Naive thymus-derived CD4-positive, alpha-beta T cell (primary cell): ENCODE measurements at regions of chr17 and their contacts with region 1.

Region 1: GRCh38 chr17:4966844-4967538 is 626 bp downstream of the SPAG7 start:
- DNase-seq: peak in 8 of 9 donors; percentile 25 to 97 (median 95)
- ATAC-seq: peak; percentile 89
- H3K4me3 ChIP-seq: peak overlapping the region; percentile 93
- H3K4me3 Mint-ChIP-seq: no peak overlapping the region
- H3K27ac ChIP-seq: peak overlapping the region; percentile 79
- H3K27ac Mint-ChIP-seq: peak overlapping the region in 3 of 9 donors; percentile 72 to 90 (median 81)
- H3K4me1 ChIP-seq: peaks cover 17 to 22% of the 10 kb centered on the region in 2 donors
- H3K4me1 Mint-ChIP-seq: peaks cover 15 to 32% (median 24%) of the 10 kb centered on the region in 7 donors
- H3K27me3 ChIP-seq: no peaks in the 10 kb centered on the region
- H3K27me3 Mint-ChIP-seq: no peaks in the 10 kb centered on the region

Region 2: GRCh38 chr17:4118015-4118743 is 848.8 kb before region 1 on chr17:
- CTCF ChIA-PET with region 1: no interaction called
- POLR2A ChIA-PET with region 1: no interaction called
- intact Hi-C with region 1: no loop called
- DNase-seq: no peak
- ATAC-seq: no peak
- H3K4me3 ChIP-seq: no peak overlapping the region
- H3K4me3 Mint-ChIP-seq: no peak overlapping the region
- H3K27ac ChIP-seq: no peak overlapping the region
- H3K27ac Mint-ChIP-seq: peak overlapping the region in 2 of 9 donors; percentile 3 to 76
- H3K4me1 ChIP-seq: no peaks in the 10 kb centered on the region
- H3K4me1 Mint-ChIP-seq: peaks cover 0 to 11% (median 4%) of the 10 kb centered on the region in 7 donors
- H3K27me3 ChIP-seq: no peaks in the 10 kb centered on the region
- H3K27me3 Mint-ChIP-seq: no peaks in the 10 kb centered on the region

Region 3: DNA sequence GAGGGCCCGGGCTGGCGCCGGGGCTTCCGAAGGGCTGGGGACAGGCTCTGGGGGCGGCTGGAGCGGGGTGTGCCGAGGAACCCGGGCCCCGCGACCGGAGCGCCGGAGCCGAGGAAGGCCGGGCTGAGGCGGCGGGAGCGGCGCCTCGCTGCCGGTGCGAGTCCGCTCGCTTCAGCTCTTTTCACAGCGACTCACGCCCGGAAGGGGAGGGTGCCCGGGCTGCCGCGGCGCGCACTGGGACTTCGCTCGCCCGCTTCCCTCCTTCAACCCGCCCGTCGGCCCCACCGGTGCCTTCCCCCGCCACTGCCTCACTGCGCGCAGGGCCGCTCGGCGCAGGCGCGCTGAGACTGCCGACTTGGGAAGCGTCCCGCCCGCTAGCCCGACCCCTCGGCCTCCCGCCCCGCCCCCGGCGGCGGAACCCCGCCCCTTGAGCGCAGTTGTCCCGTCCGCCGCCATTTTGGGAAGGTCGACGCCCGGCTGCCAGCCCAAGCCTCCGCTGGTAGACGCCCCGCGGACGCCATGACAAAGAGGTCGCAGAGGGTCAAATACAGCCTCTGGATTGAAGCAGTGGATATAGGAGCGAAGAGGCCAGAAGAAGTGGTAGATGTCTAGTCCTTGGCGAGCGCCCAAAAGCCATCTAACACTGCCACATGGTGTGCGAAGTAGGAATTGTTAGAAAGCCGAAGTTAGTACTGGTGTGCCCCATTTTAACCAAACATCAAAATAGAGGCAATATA is 600.5 kb before region 1 on chr17 and contains the start of gene UBE2G1:
- CTCF ChIA-PET with region 1: no interaction called
- POLR2A ChIA-PET with region 1: interaction called, 3 read pairs
- intact Hi-C with region 1: loop called (anchors 1 to 5 kb)
- DNase-seq: peak; percentile 97 to 100 (median 99)
- ATAC-seq: peak; percentile 93
- H3K4me3 ChIP-seq: peak within 1 kb of the TSS; percentile 58
- H3K4me3 Mint-ChIP-seq: peak within 1 kb of the TSS; percentile 82 to 95 (median 89)
- H3K27ac ChIP-seq: peak within 1 kb of the TSS; percentile 94
- H3K27ac Mint-ChIP-seq: peak within 1 kb of the TSS; percentile 91 to 99 (median 96)
- H3K4me1 ChIP-seq: peaks cover 11% of the 10 kb centered on the region in 2 donors
- H3K4me1 Mint-ChIP-seq: peaks cover 15 to 37% (median 33%) of the 10 kb centered on the region in 7 donors
- H3K27me3 ChIP-seq: no peaks in the 10 kb centered on the region
- H3K27me3 Mint-ChIP-seq: no peaks in the 10 kb centered on the region
- total RNA-seq, gene UBE2G1: 50.1 to 63.7 (median 56.6) TPM

Region 4: DNA sequence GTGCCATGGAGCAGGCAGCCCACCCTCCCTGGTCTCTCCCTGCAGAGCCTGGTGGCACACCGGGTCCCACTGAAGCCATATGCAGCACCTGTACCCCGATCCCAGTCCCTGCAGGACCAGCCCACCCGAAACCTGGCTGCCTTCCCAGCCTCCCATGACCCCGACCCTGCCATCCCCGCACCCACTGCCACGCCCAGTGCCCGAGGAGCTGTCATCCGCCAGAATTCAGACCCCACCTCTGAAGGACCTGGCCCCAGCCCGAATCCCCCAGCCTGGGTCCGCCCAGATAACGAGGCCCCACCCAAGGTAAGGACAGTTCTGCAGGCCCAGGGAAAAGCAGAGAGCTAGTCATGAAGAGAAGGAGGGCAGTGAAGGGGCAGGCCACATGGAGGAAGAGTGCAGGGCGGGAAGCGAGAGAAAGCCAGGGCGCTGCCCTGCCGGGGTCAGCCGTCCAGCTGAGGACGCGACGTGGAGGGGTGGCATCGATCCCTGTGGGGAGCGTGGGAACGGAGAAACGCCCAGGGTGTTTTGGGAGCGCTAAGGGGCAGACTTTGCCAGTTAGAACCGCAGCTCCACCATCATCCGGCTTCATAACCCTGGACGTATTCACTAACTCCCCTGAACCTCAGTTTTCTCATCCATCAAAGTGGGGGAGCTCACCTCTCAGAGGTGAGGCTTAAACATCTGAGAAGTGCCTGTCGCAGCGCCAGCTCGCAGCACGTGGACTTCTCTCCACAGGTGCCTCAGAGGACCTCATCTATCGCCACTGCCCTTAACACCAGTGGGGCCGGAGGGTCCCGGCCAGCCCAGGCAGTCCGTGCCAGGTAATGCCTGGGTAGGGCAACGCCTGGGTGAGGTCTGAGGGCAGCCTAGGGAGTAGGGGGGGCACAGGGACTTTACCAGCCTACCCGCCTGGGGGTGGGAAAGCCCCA is 75.3 kb before region 1 on chr17:
- CTCF ChIA-PET with region 1: no interaction called
- POLR2A ChIA-PET with region 1: no interaction called
- intact Hi-C with region 1: no loop called
- DNase-seq: no peak
- ATAC-seq: no peak
- H3K4me3 ChIP-seq: no peak overlapping the region
- H3K4me3 Mint-ChIP-seq: no peak overlapping the region
- H3K27ac ChIP-seq: no peak overlapping the region
- H3K27ac Mint-ChIP-seq: no peak overlapping the region
- H3K4me1 ChIP-seq: no peaks in the 10 kb centered on the region
- H3K4me1 Mint-ChIP-seq: peaks cover 0 to 5% (median 2%) of the 10 kb centered on the region in 7 donors
- H3K27me3 ChIP-seq: no peaks in the 10 kb centered on the region
- H3K27me3 Mint-ChIP-seq: no peaks in the 10 kb centered on the region

Region 5: GRCh38 chr17:4903051-4903818 is 63.8 kb before region 1 on chr17 and contains the start of gene CHRNE:
- CTCF ChIA-PET with region 1: interaction called, 5 read pairs
- POLR2A ChIA-PET with region 1: interaction called, 20 read pairs
- intact Hi-C with region 1: loop called in 1 of 2 experiments (anchors 1 kb)
- DNase-seq: peak in 8 of 9 donors; percentile 63 to 80 (median 76)
- ATAC-seq: peak; percentile 41
- H3K4me3 ChIP-seq: peak within 1 kb of the TSS; percentile 29
- H3K4me3 Mint-ChIP-seq: peak within 1 kb of the TSS; percentile 37 to 84 (median 72)
- H3K27ac ChIP-seq: no peak within 1 kb of the TSS
- H3K27ac Mint-ChIP-seq: peak within 1 kb of the TSS; percentile 57 to 98 (median 71)
- H3K4me1 ChIP-seq: peaks cover 29 to 40% of the 10 kb centered on the region in 2 donors
- H3K4me1 Mint-ChIP-seq: peaks cover 14 to 46% (median 37%) of the 10 kb centered on the region in 7 donors
- H3K27me3 ChIP-seq: no peaks in the 10 kb centered on the region
- H3K27me3 Mint-ChIP-seq: peaks cover 0 to 20% (median 0%) of the 10 kb centered on the region in 5 donors
- total RNA-seq, gene CHRNE: 0.34 to 6.5 (median 1.0) TPM

Region 6: DNA sequence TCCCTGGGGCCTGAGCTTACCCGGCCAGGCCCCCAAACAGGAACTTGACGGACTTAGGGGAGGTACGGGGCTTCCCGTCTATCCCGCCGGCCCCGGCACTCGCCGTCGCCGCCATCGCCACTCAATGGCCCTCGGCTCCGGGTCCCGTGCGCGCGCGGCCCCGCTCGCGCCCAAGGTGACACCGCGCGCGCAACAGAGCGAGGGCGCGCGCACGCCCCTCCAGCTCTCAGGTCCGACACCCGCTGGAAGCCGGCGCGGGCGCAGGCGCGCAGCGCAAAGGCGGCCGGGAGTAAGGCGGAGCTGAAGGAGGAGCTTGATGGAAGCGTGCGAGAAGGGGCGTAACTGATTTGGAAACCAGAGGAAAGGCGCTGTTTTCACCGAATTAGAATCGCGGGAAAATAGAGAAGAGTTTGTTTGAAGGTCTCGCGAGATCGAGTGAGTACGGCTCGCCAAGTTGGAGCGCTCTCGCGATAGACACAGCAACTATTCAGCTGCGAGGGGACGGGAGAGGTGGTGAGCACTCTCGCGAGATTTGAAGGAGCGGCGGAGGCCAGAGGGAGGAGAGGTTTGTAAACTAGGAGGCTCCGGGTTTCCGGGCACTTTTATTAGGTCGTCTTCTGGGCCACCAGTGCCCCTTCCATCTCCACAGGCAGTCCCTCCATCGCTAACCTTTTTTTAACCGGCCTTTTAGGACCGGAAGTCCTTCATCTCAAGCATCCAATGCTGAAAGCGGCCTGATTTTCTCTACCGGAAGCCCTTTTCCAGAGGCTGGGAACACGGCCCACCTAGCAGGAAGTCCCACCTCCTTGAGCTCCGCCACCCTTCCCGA is 27.0 kb before region 1 on chr17 and contains the starts of genes RNF167 and SLC25A11:
- CTCF ChIA-PET with region 1: interaction called, 9 read pairs
- POLR2A ChIA-PET with region 1: interaction called, 278 read pairs
- intact Hi-C with region 1: loop called (anchors 1 kb)
- DNase-seq: peak; percentile 86 to 99 (median 98)
- ATAC-seq: peak; percentile 94
- H3K4me3 ChIP-seq: peak within 1 kb of the TSS; percentile 89
- H3K4me3 Mint-ChIP-seq: peak within 1 kb of the TSS; percentile 92 to 100 (median 98)
- H3K27ac ChIP-seq: peak within 1 kb of the TSS; percentile 89
- H3K27ac Mint-ChIP-seq: peak within 1 kb of the TSS; percentile 89 to 98 (median 95)
- H3K4me1 ChIP-seq: peaks cover 47 to 48% of the 10 kb centered on the region in 2 donors
- H3K4me1 Mint-ChIP-seq: peaks cover 52 to 77% (median 66%) of the 10 kb centered on the region in 7 donors
- H3K27me3 ChIP-seq: no peaks in the 10 kb centered on the region
- H3K27me3 Mint-ChIP-seq: no peaks in the 10 kb centered on the region
- total RNA-seq, gene RNF167: 97.3 to 248 (median 148) TPM
- total RNA-seq, gene SLC25A11: 27.0 to 82.6 (median 44.1) TPM

Region 7: GRCh38 chr17:4956493-4957061 is 10.4 kb before region 1 on chr17:
- CTCF ChIA-PET with region 1: interaction called, 6 read pairs
- POLR2A ChIA-PET with region 1: interaction called, 278 read pairs
- intact Hi-C with region 1: no loop called
- DNase-seq: peak in 3 of 9 donors; percentile 9 to 47 (median 36)
- ATAC-seq: no peak
- H3K4me3 ChIP-seq: no peak overlapping the region
- H3K4me3 Mint-ChIP-seq: no peak overlapping the region
- H3K27ac ChIP-seq: no peak overlapping the region
- H3K27ac Mint-ChIP-seq: peak overlapping the region in 1 of 9 donors; percentile 67
- H3K4me1 ChIP-seq: peaks cover 0 to 7% of the 10 kb centered on the region in 2 donors
- H3K4me1 Mint-ChIP-seq: peaks cover 0 to 20% (median 13%) of the 10 kb centered on the region in 7 donors
- H3K27me3 ChIP-seq: no peaks in the 10 kb centered on the region
- H3K27me3 Mint-ChIP-seq: no peaks in the 10 kb centered on the region

Region 8: DNA sequence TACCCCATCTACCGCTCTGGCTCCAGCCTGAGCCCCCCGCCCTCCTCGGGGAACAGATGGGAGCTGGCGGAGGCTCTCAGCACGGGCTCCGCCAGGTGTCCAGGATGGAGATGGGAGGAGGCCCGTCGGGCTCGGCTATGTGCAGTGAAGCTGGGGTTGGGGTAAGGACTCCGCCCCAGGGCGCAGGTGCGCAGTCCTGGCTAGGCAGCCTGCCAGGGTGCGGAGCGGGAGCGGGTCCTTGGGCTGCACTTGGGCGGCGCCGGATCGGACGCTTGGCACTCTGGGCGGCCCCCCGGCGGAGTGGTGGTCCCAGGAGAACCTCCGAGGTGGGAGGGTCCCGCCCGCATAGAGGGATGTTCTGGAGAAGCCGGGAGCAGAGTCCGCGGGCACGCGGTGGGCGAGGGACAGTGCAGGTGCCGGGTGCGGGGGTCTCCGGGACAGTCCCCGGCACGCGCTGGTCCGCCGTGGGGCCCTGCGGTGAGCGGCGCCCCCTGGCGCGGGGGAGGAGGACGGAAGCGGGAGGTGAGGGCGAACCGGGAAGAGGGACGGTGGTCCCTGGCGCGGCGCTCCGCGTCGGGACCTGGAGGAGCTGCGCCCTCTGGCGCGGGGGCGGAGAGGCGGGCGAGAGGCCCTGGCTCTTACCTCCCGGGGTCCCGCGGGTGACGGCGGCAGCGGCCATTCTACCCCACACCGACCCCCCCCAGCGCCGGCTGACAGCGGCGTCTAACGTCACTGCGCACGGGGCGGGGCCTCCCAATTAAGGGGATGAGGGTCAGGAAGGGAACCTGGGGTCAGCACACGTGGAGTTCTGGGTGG is 20.2 kb after region 1 on chr17 and contains the start of gene CAMTA2:
- CTCF ChIA-PET with region 1: interaction called, 13 read pairs
- POLR2A ChIA-PET with region 1: interaction called, 50 read pairs
- intact Hi-C with region 1: loop called (anchors 1 kb)
- DNase-seq: peak; percentile 70 to 87 (median 80)
- ATAC-seq: peak; percentile 93
- H3K4me3 ChIP-seq: peak within 1 kb of the TSS; percentile 91
- H3K4me3 Mint-ChIP-seq: peak within 1 kb of the TSS; percentile 86 to 94 (median 91)
- H3K27ac ChIP-seq: peak within 1 kb of the TSS; percentile 99
- H3K27ac Mint-ChIP-seq: peak within 1 kb of the TSS; percentile 87 to 95 (median 93)
- H3K4me1 ChIP-seq: peaks cover 10 to 23% of the 10 kb centered on the region in 2 donors
- H3K4me1 Mint-ChIP-seq: peaks cover 29 to 51% (median 46%) of the 10 kb centered on the region in 7 donors
- H3K27me3 ChIP-seq: no peaks in the 10 kb centered on the region
- H3K27me3 Mint-ChIP-seq: no peaks in the 10 kb centered on the region
- total RNA-seq, gene CAMTA2: 55.2 to 90.0 (median 64.1) TPM

Region 9: GRCh38 chr17:5065227-5065744 is 98.3 kb after region 1 on chr17:
- CTCF ChIA-PET with region 1: interaction called, 3 read pairs
- POLR2A ChIA-PET with region 1: interaction called, 3 read pairs
- intact Hi-C with region 1: loop called in 1 of 2 experiments (anchors 1 kb)
- DNase-seq: no peak
- ATAC-seq: no peak
- H3K4me3 ChIP-seq: no peak overlapping the region
- H3K4me3 Mint-ChIP-seq: no peak overlapping the region
- H3K27ac ChIP-seq: no peak overlapping the region
- H3K27ac Mint-ChIP-seq: no peak overlapping the region
- H3K4me1 ChIP-seq: peaks cover 0 to 2% of the 10 kb centered on the region in 2 donors
- H3K4me1 Mint-ChIP-seq: peaks cover 0 to 10% (median 7%) of the 10 kb centered on the region in 7 donors
- H3K27me3 ChIP-seq: no peaks in the 10 kb centered on the region
- H3K27me3 Mint-ChIP-seq: no peaks in the 10 kb centered on the region

Region 10: DNA sequence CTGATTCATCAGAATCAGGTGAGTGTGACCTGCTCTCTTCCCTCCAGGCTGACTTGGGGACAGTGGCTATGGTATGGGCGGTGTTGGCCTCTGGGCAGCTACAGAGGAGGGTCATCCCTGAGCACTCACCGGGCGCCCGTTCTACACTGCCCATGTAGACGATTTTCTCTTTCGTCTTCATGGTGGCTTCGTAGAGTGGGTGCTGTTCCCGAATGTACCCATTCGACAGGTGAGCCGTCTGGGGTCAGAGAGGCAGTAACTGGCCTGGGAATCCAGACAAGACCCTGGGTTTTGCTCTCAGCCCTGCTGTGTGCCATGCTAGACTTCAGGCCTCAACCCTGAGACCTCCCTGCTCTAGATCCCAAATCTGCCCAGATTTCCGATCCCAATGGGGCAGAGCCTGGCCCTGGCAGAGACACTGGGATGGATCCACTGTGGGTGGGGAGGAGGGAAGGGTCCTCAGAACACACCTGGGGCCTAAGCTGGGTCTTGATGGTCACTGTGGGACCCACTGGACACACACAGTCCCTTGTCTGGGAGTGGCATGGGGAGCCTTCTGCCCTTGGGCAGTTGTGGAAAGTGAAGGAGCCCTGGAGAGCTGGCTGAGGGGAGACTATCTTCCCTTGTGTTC is 162.0 kb after region 1 on chr17:
- CTCF ChIA-PET with region 1: no interaction called
- POLR2A ChIA-PET with region 1: no interaction called
- intact Hi-C with region 1: no loop called
- DNase-seq: peak in 1 of 9 donors; percentile 11
- ATAC-seq: no peak
- H3K4me3 ChIP-seq: no peak overlapping the region
- H3K4me3 Mint-ChIP-seq: no peak overlapping the region
- H3K27ac ChIP-seq: no peak overlapping the region
- H3K27ac Mint-ChIP-seq: no peak overlapping the region
- H3K4me1 ChIP-seq: no peaks in the 10 kb centered on the region
- H3K4me1 Mint-ChIP-seq: peaks cover 0 to 3% (median 0%) of the 10 kb centered on the region in 7 donors
- H3K27me3 ChIP-seq: no peaks in the 10 kb centered on the region
- H3K27me3 Mint-ChIP-seq: peaks cover 6 to 21% (median 15%) of the 10 kb centered on the region in 5 donors

Region 11: GRCh38 chr17:5329784-5330557 is 363.0 kb after region 1 on chr17:
- CTCF ChIA-PET with region 1: no interaction called
- POLR2A ChIA-PET with region 1: no interaction called
- intact Hi-C with region 1: no loop called
- DNase-seq: peak in 3 of 9 donors; percentile 9 to 22 (median 10)
- ATAC-seq: peak; percentile 47
- H3K4me3 ChIP-seq: no peak overlapping the region
- H3K4me3 Mint-ChIP-seq: peak overlapping the region in 7 of 10 donors; percentile 1 to 45 (median 24)
- H3K27ac ChIP-seq: no peak overlapping the region
- H3K27ac Mint-ChIP-seq: peak overlapping the region in 8 of 9 donors; percentile 53 to 85 (median 70)
- H3K4me1 ChIP-seq: peaks cover 4 to 8% of the 10 kb centered on the region in 2 donors
- H3K4me1 Mint-ChIP-seq: peaks cover 16 to 43% (median 36%) of the 10 kb centered on the region in 7 donors
- H3K27me3 ChIP-seq: no peaks in the 10 kb centered on the region
- H3K27me3 Mint-ChIP-seq: no peaks in the 10 kb centered on the region